ENCODE measurements at regions of chr7 and their contacts with region 1.

Region 1: DNA sequence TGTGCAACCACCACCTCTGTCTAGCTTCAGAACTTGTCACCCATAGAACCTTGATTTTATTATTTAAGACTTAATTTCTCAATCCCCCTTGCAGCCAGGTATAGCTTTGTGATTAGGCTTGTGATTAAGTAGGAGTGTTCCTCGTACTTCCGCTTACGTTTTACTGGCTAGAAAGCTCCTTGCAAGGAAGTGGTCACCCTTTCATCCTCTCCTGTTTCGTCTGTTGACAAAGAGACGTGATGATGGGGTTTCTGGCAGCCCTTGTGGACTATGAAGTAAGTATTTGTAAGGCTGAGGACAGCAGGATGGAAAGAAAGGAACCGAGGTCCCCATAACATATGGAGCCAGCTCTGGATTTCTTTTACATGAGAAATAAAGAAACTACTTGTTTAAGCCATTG is 86.5 kb upstream of the KDM7A start:
- DNase-seq: peak in 32 of 35 experiments; percentile 14 to 78 (median 44)
- ATAC-seq: peak; percentile 79 to 94 (median 94)
- H3K4me3 ChIP-seq: no peak overlapping the region
- H3K4me3 Mint-ChIP-seq: peak overlapping the region; percentile 7 to 50 (median 17)
- H3K27ac ChIP-seq: peak overlapping the region; percentile 53
- H3K27ac Mint-ChIP-seq: peak overlapping the region; percentile 70 to 88
- H3K4me1 ChIP-seq: peaks cover 20 to 52% of the 10 kb centered on the region in 2 experiments
- H3K4me1 Mint-ChIP-seq: peaks cover 59 to 60% (median 59%) of the 10 kb centered on the region in 3 donors
- H3K27me3 ChIP-seq: no peaks in the 10 kb centered on the region
- H3K27me3 Mint-ChIP-seq: no peaks in the 10 kb centered on the region

Region 2: DNA sequence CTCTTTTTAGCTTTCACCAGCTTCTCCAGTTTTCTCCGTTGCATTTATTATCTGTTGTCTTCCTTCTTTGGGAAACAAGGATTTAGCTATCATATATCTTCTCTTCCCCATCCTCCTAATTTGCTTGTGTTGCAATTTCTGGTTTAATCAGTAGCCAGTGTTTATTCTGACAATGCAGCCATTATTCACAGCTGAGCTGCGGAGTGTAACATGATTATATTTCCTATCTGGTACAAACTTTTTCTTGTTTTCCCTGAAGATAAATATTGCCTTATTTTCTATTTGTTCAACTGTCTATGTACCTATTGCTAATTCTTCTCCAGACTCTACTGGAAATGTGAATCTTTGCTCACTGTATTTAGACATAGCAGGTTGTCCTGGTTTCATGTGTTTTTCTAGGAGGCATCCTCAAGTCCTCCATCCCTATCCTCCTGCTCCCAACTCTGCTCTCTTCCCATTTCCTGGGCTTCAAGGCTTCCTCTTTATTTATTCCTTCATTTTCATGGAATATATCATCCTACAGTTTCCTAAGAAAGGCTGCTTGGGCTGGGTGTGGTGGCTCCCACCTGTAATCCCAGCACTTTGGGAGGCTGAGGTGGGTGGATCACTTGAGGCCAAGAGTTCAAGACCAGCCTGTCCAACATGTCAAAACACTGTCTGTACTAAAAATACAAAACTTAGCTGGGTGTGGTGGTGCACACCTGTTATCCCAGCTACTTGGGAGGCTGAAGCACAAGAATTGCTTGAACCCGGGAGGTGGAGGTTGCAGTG is 14.1 kb before region 1 on chr7:
- CTCF ChIA-PET with region 1: interaction called, 3 to 10 read pairs
- POLR2A ChIA-PET with region 1: interaction called in 1 of 2 experiments, 3 read pairs
- DNase-seq: no peak
- ATAC-seq: no peak
- H3K4me3 ChIP-seq: no peak overlapping the region
- H3K4me3 Mint-ChIP-seq: no peak overlapping the region
- H3K27ac ChIP-seq: no peak overlapping the region
- H3K27ac Mint-ChIP-seq: no peak overlapping the region
- H3K4me1 ChIP-seq: peaks cover 0 to 26% of the 10 kb centered on the region in 2 experiments
- H3K4me1 Mint-ChIP-seq: peaks cover 16 to 21% (median 17%) of the 10 kb centered on the region in 3 donors
- H3K27me3 ChIP-seq: no peaks in the 10 kb centered on the region
- H3K27me3 Mint-ChIP-seq: no peaks in the 10 kb centered on the region